Activated B cell treated with CpG ODN at 0.5 μM for 24 hours (primary cell): ENCODE measurements at regions of chr11 and their contacts with region 1.

Region 1: GRCh38 chr11:7513234-7514098 is at the start of gene PPFIBP2:
- DNase-seq: peak; percentile 94
- ATAC-seq: peak; percentile 69
- H3K4me3 Mint-ChIP-seq: peak within 1 kb of the TSS; percentile 92
- H3K27ac Mint-ChIP-seq: peak within 1 kb of the TSS; percentile 97
- H3K4me1 Mint-ChIP-seq: peaks cover 47% of the 10 kb centered on the region
- H3K27me3 Mint-ChIP-seq: no peaks in the 10 kb centered on the region
- CTCF ChIP-seq: no peak
- total RNA-seq, gene PPFIBP2: 109 and 112 TPM in 2 replicates

Region 2: DNA sequence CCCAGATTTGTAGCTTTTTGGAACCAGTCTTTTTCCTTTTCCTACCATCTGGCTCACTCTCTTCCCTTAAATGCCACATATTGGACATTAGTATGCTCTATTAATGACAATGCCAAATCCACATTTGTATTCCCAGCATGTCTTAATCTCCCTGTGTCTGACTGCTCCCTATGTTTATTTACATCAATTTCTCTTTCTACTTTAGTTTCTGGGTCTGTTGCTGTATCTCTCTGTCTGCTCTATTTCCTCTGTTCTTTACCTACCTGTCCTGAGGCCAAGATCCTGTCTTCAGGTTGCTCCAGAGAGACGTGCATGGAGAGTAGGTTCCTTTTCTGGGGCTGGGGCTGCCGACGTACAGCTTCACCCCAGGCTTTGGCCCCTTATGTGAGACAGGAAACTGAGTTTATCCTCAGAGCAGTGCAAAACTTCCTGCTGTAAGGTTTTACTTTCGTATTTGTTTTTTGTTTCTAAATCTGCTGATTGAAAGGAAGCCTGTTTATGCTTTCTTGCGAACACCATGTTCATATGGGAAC is 767.3 kb before region 1 on chr11:
- CTCF ChIA-PET with region 1: no interaction called
- POLR2A ChIA-PET with region 1: no interaction called
- intact Hi-C with region 1: loop called (anchors 10 kb)
- DNase-seq: peak; percentile 24
- ATAC-seq: peak; percentile 80
- H3K4me3 Mint-ChIP-seq: no peak overlapping the region
- H3K27ac Mint-ChIP-seq: no peak overlapping the region
- H3K4me1 Mint-ChIP-seq: peaks cover 2% of the 10 kb centered on the region
- H3K27me3 Mint-ChIP-seq: no peaks in the 10 kb centered on the region
- CTCF ChIP-seq: no peak

Region 3: GRCh38 chr11:7442588-7443215 is 70.8 kb before region 1 on chr11:
- CTCF ChIA-PET with region 1: interaction called, 6 read pairs
- POLR2A ChIA-PET with region 1: interaction called, 3 read pairs
- intact Hi-C with region 1: loop called (anchors 1 kb)
- DNase-seq: peak; percentile 67
- ATAC-seq: peak; percentile 100
- H3K4me3 Mint-ChIP-seq: no peak overlapping the region
- H3K27ac Mint-ChIP-seq: no peak overlapping the region
- H3K4me1 Mint-ChIP-seq: no peaks in the 10 kb centered on the region
- H3K27me3 Mint-ChIP-seq: no peaks in the 10 kb centered on the region
- CTCF ChIP-seq: peak; percentile 42

Region 4: GRCh38 chr11:7536100-7536499 is 22.6 kb after region 1 on chr11:
- CTCF ChIA-PET with region 1: interaction called, 5 read pairs
- POLR2A ChIA-PET with region 1: interaction called, 16 read pairs
- intact Hi-C with region 1: loop called (anchors 1 kb)
- DNase-seq: no peak
- ATAC-seq: no peak
- H3K4me3 Mint-ChIP-seq: no peak overlapping the region
- H3K27ac Mint-ChIP-seq: no peak overlapping the region
- H3K4me1 Mint-ChIP-seq: peaks cover 67% of the 10 kb centered on the region
- H3K27me3 Mint-ChIP-seq: no peaks in the 10 kb centered on the region
- CTCF ChIP-seq: no peak

Region 5: DNA sequence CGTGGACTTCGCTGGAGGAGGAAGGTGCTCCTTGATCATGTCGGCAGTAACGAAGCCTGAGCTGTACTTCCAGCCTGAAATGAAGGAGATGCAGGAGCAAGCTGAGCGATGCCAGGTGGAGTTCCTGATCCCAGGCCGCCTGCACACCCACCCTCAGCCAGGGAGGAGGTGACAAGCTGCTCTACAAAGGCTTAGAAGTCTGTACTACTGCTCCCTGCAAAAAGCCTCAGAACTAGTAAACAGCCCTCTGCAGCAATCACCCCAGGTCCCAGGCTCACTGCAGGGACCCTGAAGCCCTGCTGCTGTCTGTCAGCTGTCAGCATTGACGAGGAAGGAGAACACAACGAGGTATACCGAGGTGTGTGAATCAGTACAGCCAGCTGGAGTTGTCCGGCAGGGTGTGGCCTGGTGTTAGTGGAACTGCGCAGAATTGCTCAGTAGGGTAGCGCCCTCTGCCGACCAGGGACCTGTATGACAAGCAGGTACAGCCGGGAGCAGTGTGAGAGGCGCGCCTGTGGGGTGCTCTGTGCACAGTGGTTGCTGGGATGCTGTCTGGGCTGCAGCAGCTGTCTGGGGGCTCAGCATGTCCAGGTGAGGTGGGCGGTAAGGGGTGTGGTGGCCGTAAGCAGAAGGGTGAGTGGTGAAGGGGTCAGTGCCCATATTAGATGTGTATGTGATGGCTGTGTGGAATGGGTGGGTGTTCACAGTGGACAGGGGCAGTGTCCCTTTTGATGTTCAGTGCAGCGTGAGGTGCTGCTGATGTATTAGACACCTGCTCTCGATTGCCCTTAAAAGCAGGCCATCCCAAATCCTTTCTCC is 152.2 kb after region 1 on chr11:
- CTCF ChIA-PET with region 1: interaction called, 23 read pairs
- POLR2A ChIA-PET with region 1: interaction called, 7 read pairs
- intact Hi-C with region 1: loop called (anchors 1 kb)
- DNase-seq: peak; percentile 75
- ATAC-seq: peak; percentile 99
- H3K4me3 Mint-ChIP-seq: no peak overlapping the region
- H3K27ac Mint-ChIP-seq: no peak overlapping the region
- H3K4me1 Mint-ChIP-seq: peaks cover 5% of the 10 kb centered on the region
- H3K27me3 Mint-ChIP-seq: no peaks in the 10 kb centered on the region
- CTCF ChIP-seq: peak; percentile 51